ENCODE measurements at regions of chr2 and their contacts with region 1.

Region 1: GRCh38 chr2:234500394-234501006 is 3.6 kb upstream of the ARL4C start:
- DNase-seq: peak; percentile 84
- ATAC-seq: peak; percentile 40
- H3K4me3 Mint-ChIP-seq: no peak overlapping the region
- H3K27ac Mint-ChIP-seq: no peak overlapping the region
- H3K4me1 Mint-ChIP-seq: peaks cover 31% of the 10 kb centered on the region
- H3K27me3 Mint-ChIP-seq: peaks cover 16% of the 10 kb centered on the region

Region 2: DNA sequence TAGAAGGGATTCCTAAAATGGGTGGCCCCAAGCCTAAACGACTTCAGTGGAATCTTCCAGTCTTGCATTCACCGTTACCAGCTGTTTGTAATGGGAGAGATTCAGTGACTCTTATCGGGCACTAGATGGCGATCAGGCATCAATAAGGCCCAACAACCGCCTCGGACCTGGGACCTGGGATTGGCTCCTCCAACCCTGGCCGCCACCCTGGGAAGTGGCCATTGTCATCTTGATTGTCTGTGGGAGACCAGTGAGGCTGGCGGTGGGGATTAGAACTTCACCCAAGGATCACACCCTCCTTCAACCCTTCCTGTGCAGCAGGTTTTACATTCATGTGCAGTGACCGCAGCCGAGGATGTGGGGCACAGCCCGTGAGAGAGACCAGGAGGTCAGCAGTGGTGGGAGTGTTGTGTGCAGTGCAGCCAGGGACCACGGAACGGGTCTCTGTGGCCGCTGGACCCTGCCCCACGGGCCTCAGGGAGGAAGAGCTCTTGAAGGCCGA is 364.7 kb before region 1 on chr2:
- CTCF ChIA-PET with region 1: interaction called, 65 read pairs
- POLR2A ChIA-PET with region 1: interaction called, 6 read pairs
- DNase-seq: peak; percentile 72
- ATAC-seq: peak; percentile 84
- H3K4me3 Mint-ChIP-seq: no peak overlapping the region
- H3K27ac Mint-ChIP-seq: no peak overlapping the region
- H3K4me1 Mint-ChIP-seq: peaks cover 22% of the 10 kb centered on the region
- H3K27me3 Mint-ChIP-seq: peaks cover 16% of the 10 kb centered on the region

Region 3: GRCh38 chr2:234275515-234275914 is 225.0 kb before region 1 on chr2:
- CTCF ChIA-PET with region 1: interaction called, 4 read pairs
- POLR2A ChIA-PET with region 1: interaction called, 12 read pairs
- DNase-seq: no peak
- ATAC-seq: no peak
- H3K4me3 Mint-ChIP-seq: no peak overlapping the region
- H3K27ac Mint-ChIP-seq: no peak overlapping the region
- H3K4me1 Mint-ChIP-seq: peaks cover 87% of the 10 kb centered on the region
- H3K27me3 Mint-ChIP-seq: no peaks in the 10 kb centered on the region

Region 4: GRCh38 chr2:234446404-234447076 is 54.0 kb before region 1 on chr2:
- CTCF ChIA-PET with region 1: interaction called, 6 read pairs
- POLR2A ChIA-PET with region 1: interaction called, 220 read pairs
- DNase-seq: peak; percentile 94
- ATAC-seq: peak; percentile 90
- H3K4me3 Mint-ChIP-seq: peak overlapping the region; percentile 66
- H3K27ac Mint-ChIP-seq: peak overlapping the region; percentile 99
- H3K4me1 Mint-ChIP-seq: peaks cover 86% of the 10 kb centered on the region
- H3K27me3 Mint-ChIP-seq: no peaks in the 10 kb centered on the region

Region 5: DNA sequence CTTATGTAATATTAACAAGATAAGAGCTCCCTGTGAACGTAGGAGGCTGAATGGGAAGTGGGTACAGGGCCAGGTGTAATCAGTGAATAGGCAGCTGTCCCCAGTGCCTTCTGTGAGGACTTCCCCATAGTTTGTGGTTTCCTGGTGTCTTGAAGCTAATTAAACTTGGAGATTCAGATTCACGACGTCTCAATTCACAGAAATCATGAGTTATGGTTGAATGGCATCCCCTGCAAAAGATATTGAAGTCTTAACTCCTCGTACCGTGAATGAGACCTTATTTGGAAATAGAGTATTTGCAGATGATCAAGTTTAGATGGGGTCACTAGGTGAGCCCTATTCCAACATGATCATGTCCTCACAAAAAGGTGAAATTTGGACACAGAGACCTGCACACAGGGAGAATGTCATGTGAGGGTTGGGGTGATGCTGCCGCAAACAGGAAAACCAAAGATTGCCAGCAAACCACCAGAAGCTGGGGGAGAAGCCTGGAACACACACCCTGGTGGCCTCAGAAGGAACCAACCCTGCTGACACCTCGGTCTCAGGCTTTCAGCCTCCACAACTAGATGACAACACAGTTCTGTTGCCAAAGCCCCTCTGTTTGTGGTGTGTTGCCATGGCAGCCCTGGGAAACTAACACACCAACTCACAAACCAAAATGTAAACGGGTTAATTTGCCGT is 16.8 kb before region 1 on chr2:
- CTCF ChIA-PET with region 1: interaction called, 7 read pairs
- POLR2A ChIA-PET with region 1: interaction called, 17 read pairs
- DNase-seq: peak; percentile 94
- ATAC-seq: peak; percentile 89
- H3K4me3 Mint-ChIP-seq: peak overlapping the region; percentile 51
- H3K27ac Mint-ChIP-seq: peak overlapping the region; percentile 87
- H3K4me1 Mint-ChIP-seq: peaks cover 82% of the 10 kb centered on the region
- H3K27me3 Mint-ChIP-seq: no peaks in the 10 kb centered on the region

Measured in activated CD8-positive, alpha-beta T cell treated with anti-CD3 and anti-CD28 coated beads, Interleukin-2, amount 10 ng/mL, durations not matched to agents 7 days and 5 days (primary cell).